Pancreas (tissue), 10 donors: ENCODE measurements at regions of chr1 and their contacts with region 1.

Region 1: GRCh38 chr1:233025157-233025915 is 74.9 kb downstream of the NTPCR start:
- DNase-seq: peak in 5 of 6 donors; percentile 49 to 71 (median 53)
- ATAC-seq: peak; percentile 70 to 91 (median 86)
- H3K4me3 ChIP-seq: no peak overlapping the region
- H3K27ac ChIP-seq: no peak overlapping the region
- H3K4me1 ChIP-seq: peaks cover under 1 to 7% (median 2%) of the 10 kb centered on the region in 3 donors
- H3K27me3 ChIP-seq: no peaks in the 10 kb centered on the region
- CTCF ChIP-seq: peak in 3 of 4 donors; percentile 16 to 32 (median 26)

Region 2: DNA sequence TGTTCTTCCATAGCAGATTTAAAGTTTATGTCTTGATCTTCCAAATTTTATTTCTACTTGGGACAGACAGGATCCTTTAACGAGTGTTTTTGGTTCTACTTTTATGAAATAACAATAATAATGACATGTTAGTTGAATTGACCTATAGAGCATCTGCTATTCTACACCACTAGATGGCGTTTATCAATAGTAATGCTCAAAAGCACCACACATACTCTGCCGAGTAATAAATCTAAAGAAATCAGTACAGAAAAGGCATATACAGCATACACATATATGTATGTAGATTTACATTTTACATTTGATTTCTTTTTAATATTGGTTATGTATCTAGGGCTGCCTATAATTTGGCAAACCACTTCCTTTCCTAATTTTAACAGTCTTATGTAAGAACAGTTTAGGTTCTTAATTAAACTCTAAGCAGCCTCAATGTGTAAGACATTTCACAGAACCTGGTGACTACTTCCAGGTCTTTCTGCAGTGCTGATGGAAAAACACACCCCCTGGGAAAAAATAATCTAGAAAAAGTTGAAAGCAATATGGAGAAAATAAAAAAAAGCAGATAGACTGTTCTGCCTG is 389.5 kb before region 1 on chr1:
- intact Hi-C with region 1: loop called in 2 of 3 experiments (anchors 5 to 10 kb)
- DNase-seq: no peak
- ATAC-seq: peak; percentile 67 to 86 (median 82)
- H3K4me3 ChIP-seq: no peak overlapping the region
- H3K27ac ChIP-seq: no peak overlapping the region
- H3K4me1 ChIP-seq: no peaks in the 10 kb centered on the region
- H3K27me3 ChIP-seq: no peaks in the 10 kb centered on the region
- CTCF ChIP-seq: peak; percentile 61 to 82 (median 74)

Region 3: DNA sequence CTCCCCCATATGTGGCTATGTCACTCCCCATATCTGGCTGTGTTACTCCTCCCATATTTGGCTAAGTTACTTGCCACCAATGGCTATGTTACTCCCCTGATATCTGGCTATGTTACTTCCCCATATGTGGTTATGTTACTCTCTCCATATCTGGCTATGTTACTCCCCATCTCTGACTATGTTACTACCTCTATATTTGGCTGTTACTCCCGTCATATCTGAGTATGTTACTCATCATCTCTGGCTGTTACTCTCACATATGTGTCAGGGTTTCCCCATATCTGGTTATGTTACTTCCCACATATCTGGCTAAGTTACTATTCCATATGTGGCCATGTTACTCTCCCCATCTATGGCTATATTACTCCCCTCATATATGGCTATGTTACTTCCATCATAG is 270.4 kb before region 1 on chr1:
- intact Hi-C with region 1: no loop called
- DNase-seq: no peak
- ATAC-seq: no peak
- H3K4me3 ChIP-seq: no peak overlapping the region
- H3K27ac ChIP-seq: no peak overlapping the region
- H3K4me1 ChIP-seq: no peaks in the 10 kb centered on the region
- H3K27me3 ChIP-seq: no peaks in the 10 kb centered on the region
- CTCF ChIP-seq: no peak